ENCODE measurements at regions of chr13 and their contacts with region 1.

Region 1: DNA sequence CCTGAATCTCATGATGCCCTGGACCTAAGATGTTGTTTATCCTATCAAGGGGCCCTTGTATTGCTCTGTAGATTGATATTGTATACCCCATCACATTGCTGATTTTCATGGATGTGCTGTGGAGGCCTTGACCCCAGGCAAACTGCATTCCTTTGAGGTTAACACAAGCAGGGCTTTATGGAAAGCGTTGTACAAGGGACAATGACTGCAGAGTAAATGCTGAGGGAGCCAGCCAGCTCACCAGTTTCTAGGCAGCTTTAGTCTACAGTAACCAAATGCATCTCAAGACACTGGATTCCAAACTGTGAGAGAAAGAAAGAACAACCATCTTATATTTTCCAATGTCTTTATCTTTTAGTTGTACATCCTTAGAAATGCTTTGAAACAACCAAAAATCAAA is 34.1 kb upstream of the EDNRB start:
- DNase-seq: no peak
- H3K4me3 ChIP-seq: no peak overlapping the region
- H3K27ac ChIP-seq: no peak overlapping the region
- H3K4me1 ChIP-seq: no peaks in the 10 kb centered on the region
- CTCF ChIP-seq: no peak

Region 2: GRCh38 chr13:77893066-77893465 is 59.7 kb before region 1 on chr13:
- CTCF ChIA-PET with region 1: no interaction called
- POLR2A ChIA-PET with region 1: no interaction called
- intact Hi-C with region 1: loop called (anchors 5 kb)
- DNase-seq: no peak
- H3K4me3 ChIP-seq: no peak overlapping the region
- H3K27ac ChIP-seq: no peak overlapping the region
- H3K4me1 ChIP-seq: no peaks in the 10 kb centered on the region
- CTCF ChIP-seq: no peak